ENCODE measurements at regions of chr7 and their contacts with region 1.

Region 1: GRCh38 chr7:67625257-67625737 is 628.7 kb downstream of the TYW1 start:
- DNase-seq: peak; percentile 89
- H3K4me3 ChIP-seq: peak overlapping the region in 2 of 4 donors; percentile 27 to 35
- H3K27ac ChIP-seq: no peak overlapping the region
- H3K4me1 ChIP-seq: peaks cover 0 to 5% (median 2%) of the 10 kb centered on the region in 4 donors
- H3K27me3 ChIP-seq: no peaks in the 10 kb centered on the region
- CTCF ChIP-seq: peak; percentile 42 to 89 (median 69)
- EP300 ChIP-seq: no peak
- POLR2A ChIP-seq: no peak

Region 2: DNA sequence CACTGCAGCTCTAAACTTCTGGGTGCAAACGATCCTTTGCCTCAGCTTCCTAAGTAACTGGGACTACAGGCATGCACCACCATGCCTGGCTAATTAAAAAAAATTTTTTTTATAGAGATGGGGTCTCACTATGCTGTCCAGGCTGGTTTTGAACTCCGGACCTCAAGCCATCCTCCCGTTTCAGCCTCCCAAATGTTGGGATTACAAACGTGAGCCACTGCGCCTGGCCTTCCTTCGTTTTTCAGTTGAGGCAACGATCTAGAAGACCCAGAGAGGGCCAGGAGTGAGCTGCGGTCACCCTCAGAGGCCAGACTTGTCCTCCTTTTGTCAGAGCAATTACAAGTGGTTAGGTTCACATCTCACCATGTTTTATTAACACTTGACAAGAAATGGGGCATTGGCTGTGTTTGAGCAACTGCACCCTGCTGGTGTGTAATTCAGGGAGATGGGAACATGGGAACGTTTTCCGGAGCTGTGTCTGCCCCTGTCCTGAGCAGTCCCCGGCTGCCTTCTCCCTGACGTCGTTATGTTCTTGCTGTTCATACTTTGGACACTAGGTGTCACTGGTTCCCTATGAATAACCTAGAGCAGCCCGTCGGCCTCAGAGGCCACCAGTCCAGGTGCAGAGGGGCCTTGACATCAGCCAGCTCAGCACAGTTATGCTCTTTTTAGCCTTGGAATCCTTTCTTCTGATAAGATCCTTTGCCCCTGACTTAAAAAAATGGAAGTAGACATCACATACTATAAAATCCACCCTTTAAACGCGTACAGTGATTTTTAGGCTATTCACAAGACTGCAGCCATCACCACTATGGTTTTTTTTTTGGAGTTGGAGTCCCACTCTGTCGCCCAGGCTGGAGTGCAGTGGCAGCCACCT is 253.6 kb before region 1 on chr7:
- intact Hi-C with region 1: loop called (anchors 10 kb)
- DNase-seq: peak; percentile 70
- H3K4me3 ChIP-seq: no peak overlapping the region
- H3K27ac ChIP-seq: no peak overlapping the region
- H3K4me1 ChIP-seq: no peaks in the 10 kb centered on the region
- H3K27me3 ChIP-seq: peaks cover 0 to 25% (median 8%) of the 10 kb centered on the region in 3 donors
- CTCF ChIP-seq: peak; percentile 37 to 82 (median 65)
- EP300 ChIP-seq: no peak
- POLR2A ChIP-seq: no peak

Region 3: GRCh38 chr7:67484244-67484751 is 141.0 kb before region 1 on chr7:
- intact Hi-C with region 1: loop called (anchors 10 kb)
- DNase-seq: peak; percentile 68
- H3K4me3 ChIP-seq: peak overlapping the region in 3 of 4 donors; percentile 6 to 37 (median 32)
- H3K27ac ChIP-seq: no peak overlapping the region
- H3K4me1 ChIP-seq: peaks cover 0 to 32% (median 15%) of the 10 kb centered on the region in 4 donors
- H3K27me3 ChIP-seq: no peaks in the 10 kb centered on the region
- CTCF ChIP-seq: peak in 3 of 4 experiments; percentile 55 to 72 (median 67)
- EP300 ChIP-seq: no peak
- POLR2A ChIP-seq: no peak

Measured in sigmoid colon (tissue), 7 donors.